Dendritic cell treated with granulocyte-macrophage colony-stimulating factor and Interleukin-4, amounts not matched to agents 40 ng/mL and 50 ng/mL, for 4 days (primary cell): ENCODE measurements at regions of chr6 and their contacts with region 1.

Region 1: GRCh38 chr6:37207903-37208456 is 38.0 kb downstream of the PIM1 start:
- H3K4me3 Mint-ChIP-seq: no peak overlapping the region
- H3K27ac Mint-ChIP-seq: peak overlapping the region; percentile 3
- H3K4me1 Mint-ChIP-seq: peaks cover 67% of the 10 kb centered on the region
- H3K27me3 Mint-ChIP-seq: peaks cover 10% of the 10 kb centered on the region

Region 2: DNA sequence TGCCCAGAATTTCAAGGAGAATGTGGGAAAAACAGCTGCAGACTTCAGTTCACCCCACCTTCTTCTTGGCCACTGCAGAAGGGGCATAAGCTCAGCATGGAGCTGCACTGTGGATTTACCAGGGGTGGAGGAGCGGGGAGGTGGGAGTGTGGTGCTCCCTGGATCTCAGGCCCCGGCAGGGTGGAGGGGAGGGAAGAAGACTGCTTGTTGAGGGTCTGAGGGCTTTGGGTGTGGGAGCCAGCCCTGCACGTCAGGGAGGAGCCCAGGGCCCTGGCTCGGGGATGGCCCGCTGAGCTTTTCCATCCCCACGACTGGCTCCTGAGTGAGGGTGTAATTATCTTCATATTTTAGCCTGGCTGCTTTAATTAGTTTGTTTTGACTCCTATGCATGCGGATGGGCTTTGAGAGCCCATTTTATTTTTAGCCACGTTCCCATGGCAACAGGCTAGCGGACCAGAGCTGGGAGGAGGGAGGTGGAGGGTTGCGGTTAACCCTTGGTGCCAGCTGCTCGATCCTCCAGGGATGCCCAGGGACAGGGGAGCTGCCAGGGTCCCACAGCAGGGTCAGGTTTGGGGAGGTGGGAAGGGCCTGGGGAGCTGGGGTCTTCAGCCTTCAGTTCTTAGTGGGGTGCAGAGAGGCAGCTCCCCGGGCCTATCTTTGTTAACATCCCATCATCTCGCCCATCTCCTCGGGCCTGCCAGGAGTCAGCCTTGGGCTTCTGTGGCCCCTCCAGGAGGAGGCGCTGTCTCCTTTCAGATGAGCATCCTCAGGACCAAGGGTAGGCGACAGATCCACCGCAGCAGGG is 442.2 kb before region 1 on chr6:
- intact Hi-C with region 1: loop called (anchors 2 kb)
- H3K4me3 Mint-ChIP-seq: no peak overlapping the region
- H3K27ac Mint-ChIP-seq: no peak overlapping the region
- H3K4me1 Mint-ChIP-seq: peaks cover 28% of the 10 kb centered on the region
- H3K27me3 Mint-ChIP-seq: peaks cover 5% of the 10 kb centered on the region

Region 3: DNA sequence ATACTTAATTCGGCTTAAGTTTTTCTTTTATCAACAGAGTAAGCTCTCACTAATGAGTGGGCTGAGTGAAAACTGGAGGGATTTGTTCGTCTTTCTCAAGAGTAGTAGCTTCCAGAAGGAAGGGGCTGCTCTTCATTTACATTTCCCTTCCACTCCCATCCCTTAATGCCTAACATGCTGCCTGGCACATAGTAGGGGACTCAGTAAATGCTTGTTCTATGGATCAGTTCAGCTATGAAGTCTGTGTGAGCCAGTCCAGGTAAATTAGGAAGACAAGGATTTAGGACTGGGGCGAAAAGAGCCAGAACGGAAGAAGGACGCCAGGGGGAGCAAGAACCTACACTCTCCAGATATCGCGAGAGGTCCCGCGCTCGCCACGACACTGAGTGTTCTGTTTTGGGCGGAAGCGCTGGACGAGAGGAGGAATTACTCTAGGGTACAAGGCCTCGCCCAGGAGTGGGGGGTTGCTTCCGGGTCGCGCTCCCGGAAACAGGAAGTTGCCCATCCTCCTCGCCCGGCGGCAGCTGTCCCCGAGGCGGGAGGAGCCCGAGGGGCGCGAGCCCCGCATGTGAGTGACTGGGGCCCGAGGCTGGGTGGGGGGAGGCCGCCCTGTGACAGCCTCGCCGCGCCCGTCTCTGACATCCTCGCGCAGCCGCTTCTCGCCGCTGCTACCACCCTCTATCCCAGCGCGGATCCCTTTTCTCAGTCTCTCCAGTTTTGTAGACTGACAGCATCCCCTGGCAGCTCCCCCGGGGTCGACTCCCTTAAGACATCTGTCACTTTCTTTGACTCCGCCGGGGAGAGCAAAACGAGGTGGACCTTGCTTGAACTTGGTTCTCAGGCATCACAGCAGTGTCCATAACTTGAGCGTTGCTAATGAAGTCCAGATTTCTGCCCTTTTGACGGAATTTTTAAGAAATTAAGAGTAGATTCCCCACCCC is 322.2 kb before region 1 on chr6 and contains the start of gene C6orf89:
- intact Hi-C with region 1: loop called (anchors 1 kb)
- H3K4me3 Mint-ChIP-seq: peak within 1 kb of the TSS; percentile 83
- H3K27ac Mint-ChIP-seq: peak within 1 kb of the TSS; percentile 83
- H3K4me1 Mint-ChIP-seq: peaks cover 28% of the 10 kb centered on the region
- H3K27me3 Mint-ChIP-seq: no peaks in the 10 kb centered on the region

Region 4: DNA sequence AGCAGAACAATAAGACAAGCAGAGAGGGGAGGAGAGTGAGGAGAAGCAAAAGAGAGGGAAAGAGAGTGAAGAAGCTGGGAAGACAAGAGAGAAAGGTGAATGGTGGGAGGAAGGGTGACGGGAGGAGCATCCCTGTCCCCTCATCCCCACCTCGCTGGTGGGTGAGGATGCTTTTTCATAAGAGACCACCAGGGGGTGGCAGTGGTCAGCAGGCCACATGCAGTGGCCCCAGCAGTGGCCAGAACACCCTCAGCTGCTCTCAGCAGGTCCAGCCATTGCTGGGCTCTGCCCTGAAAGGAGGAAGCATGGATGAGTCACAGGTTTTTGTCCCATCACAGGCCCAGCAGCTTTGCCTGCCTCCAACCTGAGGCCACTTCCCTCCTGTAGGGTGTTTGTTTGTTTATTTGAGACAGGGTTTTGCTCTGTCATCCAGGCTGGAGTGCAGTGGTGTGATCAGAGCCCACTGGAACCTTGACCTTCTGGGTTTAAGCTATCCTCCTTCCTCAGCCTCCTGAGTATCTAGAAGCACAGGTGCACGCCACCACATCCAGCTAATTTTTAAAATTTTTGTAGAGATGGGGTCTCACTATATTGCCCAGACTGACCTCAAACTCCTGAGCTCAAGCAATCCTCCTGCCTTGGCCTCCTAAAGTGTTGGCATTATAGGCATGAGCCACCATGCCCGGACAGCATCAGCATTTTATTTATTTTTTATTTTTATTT is 178.6 kb before region 1 on chr6:
- intact Hi-C with region 1: loop called (anchors 1 kb)
- H3K4me3 Mint-ChIP-seq: no peak overlapping the region
- H3K27ac Mint-ChIP-seq: peak overlapping the region; percentile 71
- H3K4me1 Mint-ChIP-seq: peaks cover 81% of the 10 kb centered on the region
- H3K27me3 Mint-ChIP-seq: no peaks in the 10 kb centered on the region

Region 5: DNA sequence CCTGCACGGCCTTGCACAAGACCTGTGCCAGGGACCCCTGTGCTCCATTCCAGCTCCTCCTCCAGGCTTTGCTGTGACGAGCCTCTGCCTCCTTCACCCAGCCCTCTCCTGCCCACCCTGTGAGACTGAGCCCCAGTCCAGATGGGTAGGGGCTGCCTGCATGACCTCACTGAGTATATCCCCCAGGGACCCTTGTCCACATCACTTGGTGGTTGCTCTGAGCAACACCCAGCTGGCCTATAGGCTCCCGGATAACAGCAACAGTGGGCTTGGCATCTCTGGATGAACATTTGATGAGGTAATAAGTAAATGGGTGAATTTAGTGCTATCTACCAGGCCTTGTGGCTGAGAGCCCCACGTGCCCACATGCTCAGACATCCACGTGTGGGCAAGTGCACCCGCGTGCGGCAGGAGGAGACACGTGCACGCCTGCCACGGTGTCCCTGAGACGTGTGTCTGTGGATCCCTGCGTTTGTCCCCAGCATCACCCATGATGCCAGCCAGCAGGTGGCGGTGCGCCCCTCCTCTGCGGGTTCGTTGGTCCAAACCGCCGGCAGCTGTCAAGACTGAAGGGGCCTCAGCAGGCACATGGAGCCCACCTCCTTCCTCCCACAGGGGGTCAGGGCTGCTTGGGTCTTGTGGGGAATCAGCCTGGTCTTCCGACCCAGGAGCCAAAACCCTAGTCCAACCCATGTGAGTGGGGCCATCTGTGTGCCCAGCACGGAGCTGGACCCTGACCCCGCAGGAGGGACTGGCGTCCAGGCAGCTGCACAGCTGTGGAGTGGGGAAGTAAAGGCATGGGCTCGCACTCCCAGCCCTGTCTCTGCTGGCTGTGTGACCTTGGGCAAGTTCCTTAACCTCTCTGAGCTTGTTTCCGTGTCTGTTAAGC is 156.6 kb before region 1 on chr6:
- intact Hi-C with region 1: loop called (anchors 2 kb)
- H3K4me3 Mint-ChIP-seq: peak overlapping the region; percentile 21
- H3K27ac Mint-ChIP-seq: peak overlapping the region; percentile 85
- H3K4me1 Mint-ChIP-seq: peaks cover 66% of the 10 kb centered on the region
- H3K27me3 Mint-ChIP-seq: peaks cover 20% of the 10 kb centered on the region